Naive thymus-derived CD4-positive, alpha-beta T cell (primary cell): ENCODE measurements at regions of chr6 and their contacts with region 1.

Region 1: GRCh38 chr6:4018172-4018905 is 60.6 kb downstream of the FAM217A start:
- DNase-seq: peak; percentile 91 to 98 (median 95)
- ATAC-seq: peak; percentile 83
- H3K4me3 ChIP-seq: peak overlapping the region; percentile 76
- H3K4me3 Mint-ChIP-seq: peak overlapping the region; percentile 86 to 99 (median 94)
- H3K27ac ChIP-seq: peak overlapping the region; percentile 95
- H3K27ac Mint-ChIP-seq: peak overlapping the region; percentile 95 to 100 (median 96)
- H3K4me1 ChIP-seq: peaks cover 27 to 39% of the 10 kb centered on the region in 2 donors
- H3K4me1 Mint-ChIP-seq: peaks cover 45 to 88% (median 70%) of the 10 kb centered on the region in 7 donors
- H3K27me3 ChIP-seq: no peaks in the 10 kb centered on the region
- H3K27me3 Mint-ChIP-seq: no peaks in the 10 kb centered on the region

Region 2: GRCh38 chr6:3118353-3119039 is 899.8 kb before region 1 on chr6 and contains the start of gene BPHL:
- CTCF ChIA-PET with region 1: no interaction called
- POLR2A ChIA-PET with region 1: no interaction called
- intact Hi-C with region 1: loop called (anchors 1 to 5 kb)
- DNase-seq: peak; percentile 97 to 100 (median 99)
- ATAC-seq: peak; percentile 99
- H3K4me3 ChIP-seq: peak within 1 kb of the TSS; percentile 91
- H3K4me3 Mint-ChIP-seq: peak within 1 kb of the TSS; percentile 77 to 93 (median 90)
- H3K27ac ChIP-seq: peak within 1 kb of the TSS; percentile 97
- H3K27ac Mint-ChIP-seq: peak within 1 kb of the TSS; percentile 82 to 97 (median 95)
- H3K4me1 ChIP-seq: peaks cover 0 to 4% of the 10 kb centered on the region in 2 donors
- H3K4me1 Mint-ChIP-seq: peaks cover 12 to 19% (median 18%) of the 10 kb centered on the region in 7 donors
- H3K27me3 ChIP-seq: no peaks in the 10 kb centered on the region
- H3K27me3 Mint-ChIP-seq: peaks cover 0 to 5% (median 0%) of the 10 kb centered on the region in 5 donors
- total RNA-seq, gene BPHL: 7.9 to 18.0 (median 10.0) TPM

Region 3: DNA sequence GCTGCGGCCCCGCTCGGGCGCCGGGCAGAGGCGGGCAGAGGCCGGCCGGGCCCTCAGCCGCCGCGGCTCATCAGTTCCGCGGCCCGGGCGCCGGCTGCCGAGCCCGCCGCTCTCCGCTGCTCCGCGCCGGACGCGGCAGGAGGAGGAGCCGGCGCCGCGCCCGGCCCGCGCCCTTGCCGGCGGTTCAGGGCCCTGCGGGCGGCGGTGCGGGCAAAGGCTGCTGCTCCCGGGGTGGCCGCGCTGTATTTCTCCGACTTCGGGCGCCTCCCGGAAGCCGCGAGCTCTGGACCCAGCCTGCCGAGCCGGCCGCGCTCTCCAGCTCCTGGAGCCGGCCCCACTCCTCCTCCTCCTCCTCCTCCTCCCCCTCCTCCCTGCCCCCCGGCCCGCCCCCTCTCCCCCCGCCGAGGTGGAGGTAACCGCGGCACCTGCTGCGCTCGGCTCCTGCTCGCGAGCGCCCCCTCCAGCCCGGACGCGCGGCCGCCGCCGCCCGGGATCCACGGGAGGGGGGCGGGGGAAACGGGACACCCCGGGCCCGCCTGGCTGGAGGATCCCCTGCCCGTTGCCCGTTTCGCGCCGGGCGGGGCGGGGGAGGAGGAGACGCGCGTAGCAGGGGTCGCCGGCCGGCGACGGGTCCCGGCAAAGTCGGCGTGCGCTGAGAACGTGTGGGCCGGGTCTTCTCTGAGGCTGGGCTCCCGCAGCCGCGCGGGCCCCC is 561.4 kb before region 1 on chr6 and contains the start of gene SLC22A23:
- CTCF ChIA-PET with region 1: no interaction called
- POLR2A ChIA-PET with region 1: no interaction called
- intact Hi-C with region 1: loop called (anchors 1 to 5 kb)
- DNase-seq: peak; percentile 63 to 84 (median 78)
- ATAC-seq: peak; percentile 81
- H3K4me3 ChIP-seq: peak within 1 kb of the TSS; percentile 66
- H3K4me3 Mint-ChIP-seq: peak within 1 kb of the TSS; percentile 76 to 95 (median 86)
- H3K27ac ChIP-seq: peak within 1 kb of the TSS; percentile 61
- H3K27ac Mint-ChIP-seq: peak within 1 kb of the TSS; percentile 32 to 91 (median 73)
- H3K4me1 ChIP-seq: peaks cover 8 to 24% of the 10 kb centered on the region in 2 donors
- H3K4me1 Mint-ChIP-seq: peaks cover 4 to 17% (median 12%) of the 10 kb centered on the region in 7 donors
- H3K27me3 ChIP-seq: peaks cover 0 to 4% of the 10 kb centered on the region in 2 donors
- H3K27me3 Mint-ChIP-seq: peaks cover 0 to 47% (median 8%) of the 10 kb centered on the region in 5 donors
- total RNA-seq, gene SLC22A23: 1.1 to 23.8 (median 20.0) TPM

Region 4: GRCh38 chr6:3489027-3489757 is 529.1 kb before region 1 on chr6:
- CTCF ChIA-PET with region 1: no interaction called
- POLR2A ChIA-PET with region 1: no interaction called
- intact Hi-C with region 1: no loop called
- DNase-seq: no peak
- ATAC-seq: no peak
- H3K4me3 ChIP-seq: no peak overlapping the region
- H3K4me3 Mint-ChIP-seq: no peak overlapping the region
- H3K27ac ChIP-seq: no peak overlapping the region
- H3K27ac Mint-ChIP-seq: no peak overlapping the region
- H3K4me1 ChIP-seq: no peaks in the 10 kb centered on the region
- H3K4me1 Mint-ChIP-seq: peaks cover 0 to 4% (median 0%) of the 10 kb centered on the region in 7 donors
- H3K27me3 ChIP-seq: no peaks in the 10 kb centered on the region
- H3K27me3 Mint-ChIP-seq: peaks cover 11 to 28% (median 22%) of the 10 kb centered on the region in 5 donors

Region 5: DNA sequence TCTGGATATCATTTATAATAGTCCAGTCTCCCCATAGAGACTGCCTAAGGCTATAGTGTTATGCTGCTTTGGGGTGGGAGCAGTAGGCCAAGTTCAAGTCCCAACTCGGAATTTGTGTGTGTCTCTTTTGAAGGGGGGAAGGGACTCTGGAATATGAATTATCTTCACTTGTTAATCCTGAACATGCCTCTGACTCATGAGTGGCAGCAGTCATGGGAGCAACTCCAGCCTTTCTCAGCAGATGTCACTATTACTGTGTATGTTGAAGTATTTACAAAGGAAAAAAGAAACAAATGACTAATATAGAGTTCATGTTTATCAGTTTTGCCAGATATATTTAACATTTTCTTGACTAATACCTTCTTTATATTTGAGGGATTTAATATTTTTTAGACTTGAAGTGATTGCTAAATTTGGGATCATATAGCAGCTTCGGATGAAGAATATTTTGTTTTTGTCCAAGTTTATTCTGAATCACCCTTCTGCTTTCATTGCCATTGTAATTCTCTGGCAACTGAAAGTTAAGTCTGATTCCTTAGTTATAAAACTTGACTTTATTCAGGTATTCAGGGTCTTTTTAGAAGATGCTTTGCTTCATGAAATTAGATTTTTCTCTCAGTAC is 37.2 kb after region 1 on chr6:
- CTCF ChIA-PET with region 1: interaction called, 4 read pairs
- POLR2A ChIA-PET with region 1: interaction called, 4 read pairs
- intact Hi-C with region 1: loop called (anchors 2 to 5 kb)
- DNase-seq: no peak
- ATAC-seq: peak; percentile 25
- H3K4me3 ChIP-seq: no peak overlapping the region
- H3K4me3 Mint-ChIP-seq: no peak overlapping the region
- H3K27ac ChIP-seq: no peak overlapping the region
- H3K27ac Mint-ChIP-seq: peak overlapping the region in 3 of 9 donors; percentile 63 to 82 (median 64)
- H3K4me1 ChIP-seq: peaks cover 0 to 9% of the 10 kb centered on the region in 2 donors
- H3K4me1 Mint-ChIP-seq: peaks cover 9 to 36% (median 17%) of the 10 kb centered on the region in 7 donors
- H3K27me3 ChIP-seq: no peaks in the 10 kb centered on the region
- H3K27me3 Mint-ChIP-seq: no peaks in the 10 kb centered on the region

Region 6: GRCh38 chr6:5003604-5004372 is 985.4 kb after region 1 on chr6 and contains the start of gene RPP40:
- CTCF ChIA-PET with region 1: no interaction called
- POLR2A ChIA-PET with region 1: no interaction called
- intact Hi-C with region 1: loop called (anchors 2 kb)
- DNase-seq: peak; percentile 97 to 99 (median 99)
- ATAC-seq: peak; percentile 97
- H3K4me3 ChIP-seq: peak within 1 kb of the TSS; percentile 91
- H3K4me3 Mint-ChIP-seq: peak within 1 kb of the TSS; percentile 88 to 95 (median 94)
- H3K27ac ChIP-seq: peak within 1 kb of the TSS; percentile 82
- H3K27ac Mint-ChIP-seq: peak within 1 kb of the TSS; percentile 91 to 98 (median 94)
- H3K4me1 ChIP-seq: peaks cover 9% of the 10 kb centered on the region in 2 donors
- H3K4me1 Mint-ChIP-seq: peaks cover 0 to 20% (median 13%) of the 10 kb centered on the region in 7 donors
- H3K27me3 ChIP-seq: no peaks in the 10 kb centered on the region
- H3K27me3 Mint-ChIP-seq: no peaks in the 10 kb centered on the region
- total RNA-seq, gene RPP40: 3.8 to 8.0 (median 5.1) TPM